H1 (cell line): ENCODE measurements at regions of chr11 and their contacts with region 1.

Region 1: DNA sequence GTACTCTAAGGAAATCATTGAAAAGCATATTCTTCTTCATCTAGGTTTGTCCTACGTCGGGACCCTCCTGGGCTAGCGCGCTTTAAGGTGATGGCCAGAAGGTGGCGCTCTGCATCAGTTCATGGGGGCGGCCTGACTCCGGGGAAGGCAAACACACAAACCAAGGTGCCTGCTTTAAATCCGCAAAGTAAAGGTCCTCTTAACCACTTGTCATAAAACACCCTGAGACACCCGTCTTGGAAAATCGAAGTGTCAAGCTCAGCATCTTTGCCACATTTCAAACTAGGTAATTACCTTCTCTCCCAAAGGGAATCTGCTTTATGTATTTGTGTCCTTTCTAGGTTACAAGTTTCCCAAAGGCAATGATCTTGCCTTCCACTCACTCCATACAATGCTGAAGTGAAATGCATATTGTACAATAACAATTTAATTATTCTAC is 33.9 kb downstream of the LMO2 start:
- DNase-seq: peak; percentile 59 to 92
- H3K4me3 ChIP-seq: no peak overlapping the region
- H3K27ac ChIP-seq: no peak overlapping the region
- H3K4me1 ChIP-seq: peaks cover 0 to 4% (median under 1%) of the 10 kb centered on the region in 4 experiments; a peak in 2 of 7 replicates
- H3K27me3 ChIP-seq: peaks cover 0 to 3% (median 0%) of the 10 kb centered on the region in 4 experiments; a peak in 1 of 7 replicates
- CTCF ChIP-seq: peak; percentile 91 to 96 (median 91)
- EP300 ChIP-seq: no peak
- POLR2A ChIP-seq: no peak
- RAD21 ChIP-seq: peak; percentile 98

Region 2: GRCh38 chr11:33722579-33723225 is 135.2 kb before region 1 on chr11:
- CTCF ChIA-PET with region 1: no interaction called
- POLR2A ChIA-PET with region 1: no interaction called
- DNase-seq: no peak
- H3K4me3 ChIP-seq: no peak overlapping the region
- H3K27ac ChIP-seq: no peak overlapping the region; the same call in 1 of the 2 replicates
- H3K4me1 ChIP-seq: peaks cover 0 to 4% (median under 1%) of the 10 kb centered on the region in 4 experiments; a peak in 3 of 7 replicates
- H3K27me3 ChIP-seq: no peaks in the 10 kb centered on the region
- CTCF ChIP-seq: no peak
- EP300 ChIP-seq: no peak
- POLR2A ChIP-seq: no peak
- RAD21 ChIP-seq: no peak

Region 3: GRCh38 chr11:33847251-33847650 is 10.7 kb before region 1 on chr11:
- CTCF ChIA-PET with region 1: interaction called, 27 read pairs
- POLR2A ChIA-PET with region 1: no interaction called
- DNase-seq: no peak
- H3K4me3 ChIP-seq: no peak overlapping the region
- H3K27ac ChIP-seq: no peak overlapping the region
- H3K4me1 ChIP-seq: peaks cover 0 to 1% (median 0%) of the 10 kb centered on the region in 4 experiments; a peak in 2 of 7 replicates
- H3K27me3 ChIP-seq: no peaks in the 10 kb centered on the region
- CTCF ChIP-seq: no peak
- EP300 ChIP-seq: no peak
- POLR2A ChIP-seq: no peak
- RAD21 ChIP-seq: no peak

Region 4: DNA sequence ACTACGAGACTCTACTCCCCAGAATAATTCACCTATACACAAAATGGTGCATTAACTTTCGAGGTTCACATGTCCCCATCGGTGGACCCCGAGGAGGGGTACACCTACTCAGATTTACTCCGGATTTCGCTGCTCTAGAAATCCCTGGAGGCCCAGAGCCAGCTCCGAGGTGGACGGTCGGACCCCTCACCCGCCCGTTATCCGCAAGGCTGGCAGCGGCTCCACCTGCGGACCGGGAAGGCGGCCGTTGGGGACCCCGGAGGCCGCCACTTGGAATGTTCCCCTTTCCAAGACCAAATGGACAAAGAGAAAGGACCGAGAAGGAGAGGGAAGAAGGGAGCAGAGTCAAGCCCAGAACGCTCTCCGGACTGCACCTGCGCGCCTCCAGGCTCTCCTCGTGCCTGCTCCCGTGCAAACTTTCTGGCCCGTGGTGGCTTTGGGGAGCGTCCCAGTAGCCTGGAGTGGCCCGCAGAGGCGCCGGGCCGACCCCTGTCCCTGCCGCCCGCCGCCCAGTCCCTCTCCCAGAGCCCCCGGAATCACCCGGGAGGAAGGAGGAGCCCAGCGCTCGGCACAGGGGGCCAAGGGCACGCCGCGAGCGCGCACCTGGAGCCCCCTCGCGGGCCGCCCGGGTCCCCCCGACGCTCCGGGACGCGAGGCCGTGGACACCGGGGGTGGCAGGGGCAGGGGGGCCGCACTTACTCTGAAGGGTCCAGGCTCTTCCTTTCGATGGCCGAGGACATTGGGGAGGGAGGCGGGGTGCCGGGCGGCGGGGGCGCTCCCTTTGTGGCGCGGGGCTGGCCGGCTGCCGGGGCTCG is 10.9 kb after region 1 on chr11:
- CTCF ChIA-PET with region 1: interaction called, 27 read pairs
- POLR2A ChIA-PET with region 1: interaction called, 3 read pairs
- DNase-seq: peak in 1 of 2 experiments; percentile 64
- H3K4me3 ChIP-seq: peak overlapping the region; percentile 58 to 77 (median 68)
- H3K27ac ChIP-seq: no peak overlapping the region
- H3K4me1 ChIP-seq: peaks cover 0 to 6% (median 5%) of the 10 kb centered on the region in 4 experiments; a peak in 5 of 7 replicates
- H3K27me3 ChIP-seq: peaks cover 17 to 46% (median 34%) of the 10 kb centered on the region in 4 experiments
- CTCF ChIP-seq: no peak
- EP300 ChIP-seq: no peak
- POLR2A ChIP-seq: no peak
- RAD21 ChIP-seq: no peak

Region 5: GRCh38 chr11:33912405-33913361 is 54.7 kb after region 1 on chr11:
- CTCF ChIA-PET with region 1: interaction called, 10 read pairs
- POLR2A ChIA-PET with region 1: no interaction called
- DNase-seq: no peak
- H3K4me3 ChIP-seq: no peak overlapping the region
- H3K27ac ChIP-seq: no peak overlapping the region
- H3K4me1 ChIP-seq: peaks cover 0 to 5% (median 0%) of the 10 kb centered on the region in 4 experiments; a peak in 1 of 7 replicates
- H3K27me3 ChIP-seq: no peaks in the 10 kb centered on the region
- CTCF ChIP-seq: no peak
- EP300 ChIP-seq: no peak
- POLR2A ChIP-seq: no peak
- RAD21 ChIP-seq: no peak

Region 6: DNA sequence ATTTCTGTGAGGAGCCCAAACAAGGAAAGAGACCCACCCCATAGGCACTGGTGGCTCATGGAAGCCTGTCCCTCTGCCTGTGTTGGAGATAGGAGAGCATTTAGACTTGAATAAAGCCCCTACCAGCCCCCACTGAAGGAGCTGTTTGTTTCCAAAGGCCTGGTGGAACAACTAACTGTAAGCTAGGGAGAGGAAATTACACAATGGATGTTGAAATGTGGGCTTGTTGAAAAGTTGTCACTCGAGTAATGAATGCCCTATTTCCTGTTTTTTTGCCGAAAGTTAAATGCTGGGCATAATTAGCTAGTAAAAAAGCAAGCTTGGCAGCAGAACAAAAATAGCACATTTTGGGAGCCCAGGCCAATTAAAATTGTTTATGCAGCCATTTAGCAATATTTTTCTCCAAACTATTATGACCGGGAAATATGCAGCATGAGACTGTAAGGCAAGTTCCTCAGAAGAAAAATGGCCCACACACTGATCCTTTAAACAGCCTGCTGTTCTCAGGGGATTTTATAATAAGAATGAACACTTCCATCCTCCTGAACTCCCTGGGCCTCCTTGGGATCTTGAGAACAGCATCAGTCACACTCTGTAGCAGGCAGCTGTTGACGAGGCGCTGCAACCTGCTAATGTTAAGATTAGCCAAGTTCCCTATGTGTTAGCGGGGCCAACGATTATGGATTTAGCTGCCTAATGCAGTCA is 72.5 kb after region 1 on chr11:
- CTCF ChIA-PET with region 1: interaction called, 10 read pairs
- POLR2A ChIA-PET with region 1: interaction called, 4 read pairs
- DNase-seq: no peak
- H3K4me3 ChIP-seq: no peak overlapping the region
- H3K27ac ChIP-seq: no peak overlapping the region
- H3K4me1 ChIP-seq: peaks cover 0 to 9% (median 4%) of the 10 kb centered on the region in 4 experiments; a peak in 2 of 7 replicates
- H3K27me3 ChIP-seq: no peaks in the 10 kb centered on the region
- CTCF ChIP-seq: no peak
- EP300 ChIP-seq: no peak
- POLR2A ChIP-seq: no peak
- RAD21 ChIP-seq: no peak

Region 7: GRCh38 chr11:34029176-34029575 is 171.2 kb after region 1 on chr11:
- CTCF ChIA-PET with region 1: no interaction called
- POLR2A ChIA-PET with region 1: no interaction called
- DNase-seq: no peak
- H3K4me3 ChIP-seq: no peak overlapping the region
- H3K27ac ChIP-seq: no peak overlapping the region
- H3K4me1 ChIP-seq: peaks cover 0 to 6% (median 1%) of the 10 kb centered on the region in 4 experiments; a peak in 2 of 7 replicates
- H3K27me3 ChIP-seq: no peaks in the 10 kb centered on the region
- CTCF ChIP-seq: no peak
- EP300 ChIP-seq: no peak
- POLR2A ChIP-seq: no peak
- RAD21 ChIP-seq: no peak